Right ventricle myocardium superior (tissue), 1 donor: ENCODE measurements at regions of chr9 and their contacts with region 1.

Region 1: DNA sequence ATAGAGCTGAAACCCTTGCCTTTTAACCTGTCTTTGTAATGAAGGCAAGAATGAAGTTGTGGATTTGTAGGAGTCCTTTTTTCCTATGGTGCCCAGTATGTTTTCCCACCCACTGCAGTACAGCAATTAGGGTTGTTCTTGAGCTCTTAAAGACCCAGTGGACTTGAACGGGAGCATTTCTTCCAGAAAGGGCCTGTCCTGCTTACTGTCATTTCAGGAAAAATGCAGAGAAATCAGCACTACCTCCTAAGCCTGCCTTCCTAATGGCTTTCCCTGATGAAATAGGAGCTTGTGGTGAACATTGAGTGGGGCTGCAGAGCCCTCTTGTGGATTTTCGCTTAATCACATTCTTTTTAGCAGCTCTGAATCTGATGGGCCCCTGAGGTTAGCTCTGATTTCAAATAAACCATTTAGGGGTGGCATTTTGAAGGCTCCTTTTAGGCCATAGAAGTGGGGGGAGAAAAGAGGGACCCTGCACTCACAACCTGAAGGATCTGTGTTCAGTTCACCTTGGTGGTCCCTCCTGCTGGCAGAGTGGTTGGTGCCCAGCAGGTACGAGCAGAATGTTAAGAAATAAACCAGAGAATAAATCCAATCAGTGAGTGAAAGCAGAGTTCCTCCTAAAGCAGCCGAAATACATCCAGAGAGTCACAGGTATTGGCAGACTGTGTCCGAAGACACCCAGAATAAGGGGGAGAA is 188.0 kb upstream of the KLF9 start:
- DNase-seq: peak; percentile 51
- ATAC-seq: peak; percentile 75

Region 2: DNA sequence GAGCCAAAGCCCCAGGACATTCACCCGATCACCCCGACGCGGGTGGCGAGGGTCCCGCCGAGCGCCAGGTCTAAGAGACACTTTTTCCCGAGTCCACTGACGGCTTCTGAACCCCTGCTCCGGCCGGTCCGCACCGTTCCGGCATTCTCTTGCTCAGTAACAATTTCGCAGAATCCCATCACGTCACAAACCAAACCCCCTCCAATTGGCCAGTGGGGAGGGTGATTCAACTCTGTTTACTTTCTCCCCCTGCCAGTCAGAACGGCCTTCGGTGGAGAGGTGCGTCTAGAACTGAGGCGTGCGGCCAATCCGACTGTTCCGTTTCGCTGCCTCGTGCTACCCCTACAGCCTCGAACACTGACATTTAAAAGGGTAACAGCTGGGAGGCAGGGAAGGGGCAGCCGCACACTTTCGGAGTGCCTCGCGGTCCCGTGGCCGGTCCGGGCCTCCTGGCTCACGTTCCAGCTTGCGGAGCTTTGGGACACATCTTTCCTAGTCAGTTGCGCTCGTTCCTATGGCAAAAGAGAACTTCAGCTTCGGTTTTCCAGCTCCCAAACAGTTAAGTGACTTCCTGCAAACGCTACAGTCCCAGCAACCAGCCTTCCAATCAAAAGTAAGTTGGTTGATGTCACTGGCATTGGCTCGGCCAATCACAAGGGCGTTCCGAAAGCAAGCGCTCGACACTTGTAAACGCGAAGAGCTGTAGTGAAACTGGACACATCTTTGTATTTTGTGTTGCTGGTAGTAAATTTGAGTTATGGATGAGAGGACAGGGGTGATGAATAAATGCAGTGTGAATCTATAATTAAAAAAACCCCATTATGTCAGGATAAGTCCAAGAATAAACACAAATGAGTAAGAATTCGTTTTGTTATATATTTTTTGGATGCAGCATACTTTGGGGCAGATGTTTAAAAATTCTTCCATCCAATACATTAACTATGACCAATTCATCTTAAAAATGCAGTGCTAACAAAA is 188.4 kb before region 1 on chr9 and contains the start of gene KLF9:
- intact Hi-C with region 1: loop called (anchors 2 kb)
- DNase-seq: peak; percentile 95
- ATAC-seq: peak; percentile 70
- total RNA-seq, gene KLF9: 50.9 TPM